SK-N-SH (cell line): ENCODE measurements at regions of chr7 and their contacts with region 1.

Region 1: DNA sequence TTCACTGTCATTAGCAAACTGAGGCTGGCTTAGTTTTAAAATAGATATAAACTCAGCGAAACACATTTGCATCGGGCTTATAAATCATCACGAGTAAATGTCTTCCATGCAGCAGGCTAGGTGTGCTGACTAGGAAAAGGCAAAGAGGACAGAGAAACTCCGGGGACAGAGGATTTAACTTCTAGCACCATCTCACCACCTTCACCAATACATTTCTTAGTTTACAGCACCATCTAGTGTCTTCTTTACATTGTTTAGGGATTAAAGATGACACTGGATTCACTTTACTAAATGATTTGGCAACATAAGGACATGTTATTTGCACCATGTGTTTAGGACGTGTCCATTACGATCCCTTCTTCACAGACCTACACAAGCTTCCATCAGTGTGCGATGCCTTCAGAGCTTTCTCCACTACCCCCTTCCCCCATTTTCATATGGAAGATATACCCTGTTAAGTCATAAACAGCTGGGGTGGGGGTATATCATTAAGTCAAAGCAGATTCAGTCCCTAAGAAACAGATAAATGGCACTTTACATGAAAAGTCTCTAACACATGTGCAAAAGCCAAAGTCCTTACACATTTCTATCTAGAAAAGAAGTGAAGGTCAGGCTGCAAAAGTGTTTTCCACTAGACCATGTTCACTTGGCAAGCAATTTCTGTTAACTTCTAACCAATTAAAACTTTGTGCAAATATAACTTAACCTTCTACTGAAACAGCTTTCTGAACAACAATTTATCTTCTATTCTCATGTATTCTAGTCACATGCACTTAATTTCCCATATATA is 103.3 kb downstream of the GRB10 start:
- DNase-seq: peak; percentile 80
- H3K4me3 ChIP-seq: no peak overlapping the region
- H3K27ac ChIP-seq: no peak overlapping the region
- H3K4me1 ChIP-seq: peaks cover 0 to 22% of the 10 kb centered on the region in 2 experiments; a peak in 2 of 4 replicates
- H3K27me3 ChIP-seq: no peaks in the 10 kb centered on the region
- CTCF ChIP-seq: peak; percentile 68
- EP300 ChIP-seq: no peak
- RAD21 ChIP-seq: peak; percentile 99

Region 2: DNA sequence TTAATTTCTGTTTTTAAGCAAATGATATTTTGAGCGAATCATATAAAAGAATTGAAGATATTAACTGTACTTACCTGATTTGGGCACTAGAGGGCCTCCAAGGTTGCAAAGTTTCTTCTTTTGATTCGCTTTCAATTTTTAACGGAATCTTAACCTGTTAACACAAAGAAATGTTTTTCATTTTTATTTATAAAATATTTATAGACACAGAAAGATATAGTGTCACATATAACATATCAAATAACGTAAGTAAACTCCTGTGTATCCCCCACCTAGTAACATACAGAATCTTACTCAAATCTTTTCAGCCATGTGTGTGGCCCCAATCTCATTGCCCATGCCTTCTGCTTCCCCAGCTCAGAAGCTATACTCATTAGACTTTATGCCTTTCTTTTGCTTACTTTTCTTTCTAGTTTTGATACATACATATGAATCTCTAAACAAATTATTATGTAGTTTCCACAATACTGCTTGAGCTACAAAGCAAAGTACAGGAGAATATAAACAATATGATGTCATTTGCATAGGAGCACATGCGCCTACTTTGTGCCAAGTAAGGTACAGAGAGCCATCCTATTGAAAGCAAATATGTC is 536.9 kb before region 1 on chr7:
- CTCF ChIA-PET with region 1: interaction called, 10 read pairs
- POLR2A ChIA-PET with region 1: no interaction called
- DNase-seq: no peak
- H3K4me3 ChIP-seq: no peak overlapping the region; a peak in 1 of 4 replicates
- H3K27ac ChIP-seq: no peak overlapping the region
- H3K4me1 ChIP-seq: no peaks in the 10 kb centered on the region
- H3K27me3 ChIP-seq: no peaks in the 10 kb centered on the region
- CTCF ChIP-seq: peak; percentile 93
- EP300 ChIP-seq: no peak
- RAD21 ChIP-seq: peak; percentile 82

Region 3: DNA sequence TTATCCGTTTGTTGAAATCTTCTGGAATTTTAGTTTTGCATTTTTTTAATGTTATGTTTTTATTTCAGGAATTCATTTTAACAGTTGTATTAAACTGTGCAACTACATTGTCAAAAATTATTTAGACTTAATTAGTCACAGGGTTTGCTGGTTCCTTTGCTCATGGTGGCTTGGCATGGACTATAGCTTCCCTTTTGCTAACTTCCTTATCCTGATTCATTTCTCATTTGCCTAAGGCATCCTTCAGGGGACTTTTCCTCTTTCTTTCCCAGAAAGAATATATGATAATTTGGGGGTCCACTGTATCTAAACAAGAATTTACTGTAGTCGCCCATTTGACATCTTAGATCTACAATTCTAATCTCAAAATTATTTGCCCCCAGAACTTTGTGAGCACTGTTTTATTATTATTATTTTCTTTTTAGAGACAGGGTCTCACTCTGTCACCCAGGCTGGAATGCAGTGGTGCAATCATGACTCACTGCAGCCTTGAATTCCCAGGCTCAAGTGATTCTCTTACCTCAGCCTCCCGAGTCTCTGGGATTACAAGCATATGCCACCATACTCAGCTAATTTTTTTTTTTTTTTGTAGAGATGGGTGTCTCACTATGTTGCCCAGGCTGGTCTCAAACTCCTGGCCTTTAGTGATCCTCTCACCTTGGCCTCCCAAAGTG is 243.1 kb before region 1 on chr7:
- CTCF ChIA-PET with region 1: interaction called, 10 read pairs
- POLR2A ChIA-PET with region 1: no interaction called
- DNase-seq: no peak
- H3K4me3 ChIP-seq: no peak overlapping the region
- H3K27ac ChIP-seq: peak overlapping the region in 1 of 2 experiments; percentile 54; a peak in 2 of 4 replicates
- H3K4me1 ChIP-seq: peaks cover 0 to 11% of the 10 kb centered on the region in 2 experiments; a peak in 2 of 4 replicates
- H3K27me3 ChIP-seq: no peaks in the 10 kb centered on the region
- CTCF ChIP-seq: no peak
- EP300 ChIP-seq: no peak
- RAD21 ChIP-seq: no peak

Region 4: GRCh38 chr7:50595491-50596102 is 83.8 kb before region 1 on chr7:
- CTCF ChIA-PET with region 1: interaction called, 64 read pairs
- POLR2A ChIA-PET with region 1: no interaction called
- DNase-seq: peak; percentile 76
- H3K4me3 ChIP-seq: no peak overlapping the region
- H3K27ac ChIP-seq: no peak overlapping the region
- H3K4me1 ChIP-seq: peaks cover 0 to 19% of the 10 kb centered on the region in 2 experiments; a peak in 1 of 4 replicates
- H3K27me3 ChIP-seq: no peaks in the 10 kb centered on the region
- CTCF ChIP-seq: peak; percentile 73
- EP300 ChIP-seq: no peak
- RAD21 ChIP-seq: peak; percentile 75

Region 5: DNA sequence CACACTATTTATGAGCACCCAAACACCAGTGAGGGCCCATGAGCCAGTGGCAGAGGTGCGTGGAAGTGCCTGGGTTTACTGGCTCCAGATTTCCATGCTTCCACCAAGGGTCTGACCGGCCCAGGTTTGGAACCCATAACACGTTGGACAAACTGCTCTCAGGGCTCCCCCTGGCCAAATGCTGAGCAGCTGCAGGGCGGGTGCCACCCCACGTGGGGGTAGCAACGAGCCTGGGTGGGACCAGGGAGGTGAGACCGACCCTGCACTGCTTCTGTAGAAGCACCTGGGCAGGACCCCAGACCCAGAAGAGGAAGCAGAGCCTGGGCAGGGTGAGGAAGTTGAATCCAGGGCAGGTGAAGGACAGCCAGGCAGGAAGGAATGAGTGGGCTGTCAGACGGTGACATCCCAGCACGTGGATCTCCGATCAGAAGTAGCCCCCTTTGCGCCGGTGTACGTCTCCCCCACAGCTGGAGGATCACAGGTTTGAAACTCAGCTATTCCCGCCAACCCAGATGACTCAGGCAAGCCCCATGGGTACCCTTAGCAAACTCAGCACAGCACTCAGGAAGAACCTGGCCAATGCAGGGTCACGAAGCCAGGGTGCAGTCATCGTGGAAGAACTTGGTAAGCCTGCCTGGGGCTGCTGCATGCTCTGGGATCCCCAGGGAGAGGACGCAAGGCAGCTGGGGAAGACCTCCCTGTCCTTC is 13.8 kb before region 1 on chr7:
- CTCF ChIA-PET with region 1: interaction called, 14 read pairs
- POLR2A ChIA-PET with region 1: no interaction called
- DNase-seq: no peak
- H3K4me3 ChIP-seq: no peak overlapping the region
- H3K27ac ChIP-seq: no peak overlapping the region
- H3K4me1 ChIP-seq: peaks cover 8 to 13% of the 10 kb centered on the region in 2 experiments; a peak in 3 of 4 replicates
- H3K27me3 ChIP-seq: no peaks in the 10 kb centered on the region
- CTCF ChIP-seq: no peak; the same call in 1 of the 2 replicates
- EP300 ChIP-seq: no peak
- RAD21 ChIP-seq: no peak

Region 6: GRCh38 chr7:51102828-51103227 is 423.4 kb after region 1 on chr7:
- CTCF ChIA-PET with region 1: no interaction called
- POLR2A ChIA-PET with region 1: no interaction called
- DNase-seq: no peak
- H3K4me3 ChIP-seq: no peak overlapping the region
- H3K27ac ChIP-seq: no peak overlapping the region
- H3K4me1 ChIP-seq: no peaks in the 10 kb centered on the region
- H3K27me3 ChIP-seq: peaks cover 44% of the 10 kb centered on the region
- CTCF ChIP-seq: no peak
- EP300 ChIP-seq: no peak
- RAD21 ChIP-seq: no peak